ENCODE measurements at regions of chr3 and their contacts with region 1.

Region 1: DNA sequence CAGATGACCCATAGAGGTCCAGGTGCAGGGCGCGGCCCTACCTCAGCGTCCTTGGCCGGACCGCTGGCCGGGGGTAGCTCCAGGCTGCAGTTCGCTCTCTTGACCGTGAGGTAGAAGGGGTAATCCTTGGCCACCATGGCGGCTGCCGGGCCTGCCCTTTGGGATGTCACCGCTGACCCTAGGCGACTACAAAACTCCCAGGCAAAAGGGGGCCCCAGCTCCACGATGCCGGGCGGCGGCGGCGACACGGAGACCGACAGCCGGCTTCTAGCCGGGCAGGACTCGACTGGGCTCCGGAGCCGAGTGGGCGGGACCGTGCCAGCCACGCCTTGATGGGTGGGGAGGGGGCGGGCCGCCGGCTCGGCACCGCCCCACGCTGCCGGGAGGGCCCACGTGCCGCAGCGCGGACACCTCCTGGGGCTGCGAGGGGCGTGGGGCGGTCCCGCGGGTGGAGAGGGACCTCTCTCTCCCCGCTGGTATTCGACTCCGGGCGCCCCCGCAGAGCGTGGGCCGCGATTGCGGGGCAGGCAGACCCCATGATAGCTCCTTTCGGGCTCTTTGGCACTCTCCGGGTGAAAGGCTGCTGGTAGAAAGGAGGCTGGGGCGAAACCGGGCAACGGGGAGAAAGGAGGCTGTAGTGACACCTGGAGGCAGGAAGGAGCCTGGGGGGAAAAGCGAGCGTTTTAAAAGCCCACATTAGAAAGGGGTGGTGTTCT is at the start of gene ARHGEF3:
- DNase-seq: peak; percentile 72 to 87
- H3K4me3 ChIP-seq: peak within 1 kb of the TSS; percentile 67 to 82
- H3K27ac ChIP-seq: peak within 1 kb of the TSS; percentile 50 to 55
- H3K4me1 ChIP-seq: peaks cover 0 to 28% (median 19%) of the 10 kb centered on the region in 4 donors
- H3K27me3 ChIP-seq: no peaks in the 10 kb centered on the region
- CTCF ChIP-seq: peak in 1 of 2 experiments; percentile 11

Region 2: GRCh38 chr3:56693750-56694149 is 108.1 kb before region 1 on chr3:
- intact Hi-C with region 1: no loop called
- DNase-seq: peak in 1 of 2 donors; percentile 56
- H3K4me3 ChIP-seq: no peak overlapping the region
- H3K27ac ChIP-seq: no peak overlapping the region
- H3K4me1 ChIP-seq: no peaks in the 10 kb centered on the region
- H3K27me3 ChIP-seq: no peaks in the 10 kb centered on the region
- CTCF ChIP-seq: no peak

Region 3: GRCh38 chr3:56930706-56931105 is 128.9 kb after region 1 on chr3:
- intact Hi-C with region 1: no loop called
- DNase-seq: no peak
- H3K4me3 ChIP-seq: no peak overlapping the region
- H3K27ac ChIP-seq: no peak overlapping the region
- H3K4me1 ChIP-seq: peaks cover 0 to 24% (median 14%) of the 10 kb centered on the region in 4 donors
- H3K27me3 ChIP-seq: no peaks in the 10 kb centered on the region
- CTCF ChIP-seq: no peak

Region 4: DNA sequence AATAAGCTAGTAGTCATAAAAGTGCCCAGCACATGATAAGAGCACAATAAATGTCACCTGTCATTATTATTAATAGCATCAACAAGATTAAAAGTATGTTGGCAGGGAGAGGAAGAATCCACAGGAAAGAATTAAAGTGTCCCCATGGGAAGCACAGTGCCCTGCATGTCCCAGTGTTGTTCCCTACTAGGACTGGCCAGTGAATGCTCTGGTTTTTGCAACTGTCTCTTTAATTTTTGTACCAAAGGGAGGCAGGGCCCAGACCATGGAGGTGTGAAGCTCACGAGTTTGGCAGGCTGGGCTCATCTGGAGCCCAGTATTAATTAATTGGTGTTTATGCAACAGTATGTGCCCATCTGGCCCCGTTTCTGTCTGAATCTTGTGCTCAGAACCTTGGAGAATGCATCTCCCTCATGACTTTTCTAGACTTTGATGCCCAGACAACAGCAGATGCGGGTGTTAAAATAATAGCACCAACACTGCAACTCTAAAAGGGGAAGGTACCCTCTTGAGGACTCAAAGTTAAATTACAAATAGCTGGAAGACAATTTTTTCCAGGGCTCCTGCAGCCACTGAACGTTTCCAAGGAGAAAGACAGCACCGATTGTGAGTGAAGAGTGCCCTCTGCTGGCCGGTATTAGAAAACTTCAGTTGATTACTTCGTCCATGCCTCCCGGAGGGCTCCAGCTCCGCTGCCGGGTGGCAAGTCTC is 186.8 kb after region 1 on chr3:
- intact Hi-C with region 1: loop called (anchors 5 kb)
- DNase-seq: peak; percentile 81 to 85
- H3K4me3 ChIP-seq: no peak overlapping the region
- H3K27ac ChIP-seq: no peak overlapping the region
- H3K4me1 ChIP-seq: peaks cover 0 to 40% (median 26%) of the 10 kb centered on the region in 4 donors
- H3K27me3 ChIP-seq: peaks cover 0 to 10% of the 10 kb centered on the region in 2 donors
- CTCF ChIP-seq: peak; percentile 76 to 89

Measured in tibial artery (tissue), 4 donors.